Common myeloid progenitor, CD34-positive (primary cell): ENCODE measurements at regions of chr7 and their contacts with region 1.

Region 1: DNA sequence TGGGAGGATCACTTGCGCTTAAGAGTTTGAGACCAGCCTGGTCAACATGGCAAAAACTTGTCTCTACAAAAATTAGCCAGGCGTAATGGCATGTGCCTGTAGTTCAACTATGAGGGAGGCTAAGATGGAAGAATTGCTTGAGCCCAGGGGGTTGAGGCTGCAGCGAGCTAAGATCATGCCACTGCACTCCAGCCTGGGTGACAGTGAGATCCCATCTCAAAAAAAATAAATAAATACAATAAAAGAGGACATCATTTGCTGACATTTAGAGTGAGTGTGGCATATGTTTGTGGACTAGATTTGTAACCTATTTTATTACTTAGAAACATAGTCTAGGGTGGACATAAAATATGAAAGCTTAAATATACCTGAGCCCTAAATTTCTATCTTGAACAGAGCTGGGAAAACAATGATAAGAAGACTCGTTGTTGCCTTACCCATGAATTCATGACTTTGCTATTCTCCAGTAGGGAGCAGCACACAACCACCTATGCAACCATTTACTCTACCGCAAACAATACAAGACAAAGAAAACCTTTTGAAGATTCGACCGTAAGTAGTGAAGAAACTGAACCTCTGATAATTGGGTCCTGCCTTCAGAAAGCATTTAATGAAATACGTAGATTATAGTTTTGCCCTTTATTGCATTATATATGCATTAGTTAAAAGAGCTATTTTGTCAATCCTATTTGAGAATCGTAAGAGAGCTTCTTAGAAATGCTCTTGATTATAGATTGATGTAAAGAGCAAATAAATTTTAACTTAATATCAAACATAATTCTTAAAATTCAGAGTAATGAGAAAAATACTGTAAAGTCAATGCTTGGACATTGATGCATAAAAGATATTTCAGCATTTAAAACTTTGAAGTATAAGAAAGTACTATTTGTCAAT is 83.5 kb downstream of the GNAT3 start:
- DNase-seq: peak; percentile 72 to 84 (median 82)
- H3K4me3 ChIP-seq: peak overlapping the region in 1 of 7 experiments; percentile 7
- H3K27ac ChIP-seq: no peak overlapping the region
- H3K4me1 ChIP-seq: no peaks in the 10 kb centered on the region
- H3K27me3 ChIP-seq: no peaks in the 10 kb centered on the region

Region 2: GRCh38 chr7:80439894-80440821 is 11.8 kb after region 1 on chr7:
- CTCF ChIA-PET with region 1: interaction called, 23 read pairs
- POLR2A ChIA-PET with region 1: no interaction called
- DNase-seq: no peak
- H3K4me3 ChIP-seq: no peak overlapping the region
- H3K27ac ChIP-seq: no peak overlapping the region
- H3K4me1 ChIP-seq: peaks cover 0 to 5% (median 2%) of the 10 kb centered on the region in 4 experiments
- H3K27me3 ChIP-seq: no peaks in the 10 kb centered on the region

Region 3: GRCh38 chr7:80450621-80451308 is 22.4 kb after region 1 on chr7:
- CTCF ChIA-PET with region 1: interaction called, 11 read pairs
- POLR2A ChIA-PET with region 1: no interaction called
- DNase-seq: peak; percentile 68 to 93 (median 91)
- H3K4me3 ChIP-seq: no peak overlapping the region
- H3K27ac ChIP-seq: no peak overlapping the region
- H3K4me1 ChIP-seq: peaks cover 2 to 7% (median 4%) of the 10 kb centered on the region in 4 experiments
- H3K27me3 ChIP-seq: no peaks in the 10 kb centered on the region

Region 4: DNA sequence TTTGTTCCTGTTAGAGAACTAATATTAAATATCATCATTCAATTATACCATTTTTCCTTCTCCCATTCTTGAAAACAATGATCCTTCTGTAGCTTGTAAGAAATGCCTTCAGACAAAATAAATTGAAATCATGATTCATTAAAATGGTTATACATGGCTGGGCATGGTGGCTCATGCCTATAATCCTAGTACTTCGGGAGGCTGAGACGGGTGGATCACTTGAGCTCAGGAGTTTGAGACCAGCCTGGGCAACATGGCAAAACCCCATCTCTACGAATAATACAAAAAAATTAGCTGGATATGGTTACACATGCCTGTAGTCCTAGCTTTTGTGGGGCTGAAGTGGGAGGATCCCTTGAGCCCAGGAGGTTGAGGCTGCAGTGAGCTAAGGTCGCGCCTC is 223.1 kb after region 1 on chr7:
- CTCF ChIA-PET with region 1: interaction called, 15 read pairs
- POLR2A ChIA-PET with region 1: no interaction called
- DNase-seq: no peak
- H3K4me3 ChIP-seq: no peak overlapping the region
- H3K27ac ChIP-seq: no peak overlapping the region
- H3K4me1 ChIP-seq: no peaks in the 10 kb centered on the region
- H3K27me3 ChIP-seq: no peaks in the 10 kb centered on the region

Region 5: DNA sequence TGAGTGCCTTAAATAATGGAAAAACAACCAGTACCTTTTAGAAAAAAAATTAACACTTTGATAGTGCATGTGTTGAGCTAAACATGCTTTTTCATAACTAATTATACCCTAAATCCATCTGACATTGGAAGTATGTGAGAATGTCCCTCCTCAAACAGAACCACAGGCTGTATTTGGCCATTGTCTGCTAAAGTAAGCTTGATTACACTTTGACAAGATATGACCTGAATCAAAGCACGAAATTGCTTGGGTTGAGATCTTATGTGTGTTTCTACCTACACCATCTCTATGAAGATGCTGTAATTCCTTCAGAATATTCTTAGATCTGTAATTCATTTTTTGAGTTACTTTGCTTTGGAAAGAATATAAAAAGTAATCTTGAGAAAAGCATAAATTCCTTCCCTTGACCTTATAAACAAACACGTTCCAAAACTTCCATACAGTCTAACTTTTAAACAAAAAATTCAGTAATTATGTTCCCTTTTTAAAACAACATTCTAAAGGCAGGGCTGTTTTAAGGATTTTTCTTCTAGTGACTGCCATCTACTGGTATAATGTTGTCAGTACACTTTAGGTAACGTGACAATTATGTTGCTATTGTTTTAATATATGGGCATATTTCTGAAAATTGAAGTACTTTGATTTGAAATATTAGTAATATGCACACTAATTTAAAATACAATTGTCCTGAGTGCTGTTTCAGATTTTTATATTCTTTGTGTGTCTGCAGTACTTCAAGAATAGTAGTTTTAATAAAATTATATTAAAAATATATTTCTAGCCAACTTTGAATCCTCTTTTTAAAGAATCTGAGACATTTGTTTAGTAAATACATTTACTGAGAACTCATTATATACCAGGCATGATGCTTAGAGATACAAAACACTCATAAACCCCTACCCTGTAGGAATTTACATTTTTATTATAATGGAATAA is 231.0 kb after region 1 on chr7:
- CTCF ChIA-PET with region 1: interaction called, 25 read pairs
- POLR2A ChIA-PET with region 1: no interaction called
- DNase-seq: peak; percentile 28 to 66 (median 66)
- H3K4me3 ChIP-seq: no peak overlapping the region
- H3K27ac ChIP-seq: no peak overlapping the region
- H3K4me1 ChIP-seq: peaks cover 0 to 5% (median under 1%) of the 10 kb centered on the region in 4 experiments
- H3K27me3 ChIP-seq: no peaks in the 10 kb centered on the region